Aorta (tissue), 5 donors: ENCODE measurements at regions of chr17 and their contacts with region 1.

Region 1: DNA sequence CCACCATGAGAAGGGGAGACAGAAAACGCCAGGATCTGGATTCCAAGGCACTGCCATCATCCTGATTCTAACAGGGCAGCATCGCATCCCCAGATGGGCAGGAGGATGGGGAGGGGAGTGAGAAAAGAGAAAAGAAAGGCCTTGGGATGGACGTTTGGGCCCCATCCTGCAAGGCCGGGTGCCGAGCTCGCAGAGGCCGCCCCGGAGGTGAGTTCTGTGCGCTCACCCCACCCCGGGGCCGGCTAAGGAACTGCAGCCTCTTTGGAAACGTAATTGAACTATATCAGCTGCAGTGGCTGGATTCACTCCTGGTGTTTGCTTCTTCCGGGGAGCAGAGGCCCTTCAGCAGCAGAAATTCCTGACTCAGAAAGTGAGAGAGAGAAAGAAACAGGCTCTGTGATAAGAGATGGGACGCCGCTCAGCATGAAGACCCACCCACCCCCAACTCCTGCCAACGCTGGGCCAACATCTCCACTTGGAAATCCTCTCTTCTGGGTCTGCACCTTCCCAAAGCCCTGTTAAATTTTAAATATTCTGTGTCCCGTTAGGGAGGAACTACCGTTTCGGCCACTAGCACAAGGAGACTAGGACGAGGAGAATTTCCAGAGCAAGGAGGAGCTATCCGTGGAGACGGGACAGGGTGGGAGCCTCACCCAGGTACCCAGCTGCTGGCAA is 8.5 kb upstream of the SSTR2 start:
- DNase-seq: peak; percentile 80 to 88
- ATAC-seq: peak; percentile 94
- H3K4me3 ChIP-seq: no peak overlapping the region
- H3K27ac ChIP-seq: no peak overlapping the region
- H3K4me1 ChIP-seq: no peaks in the 10 kb centered on the region
- H3K27me3 ChIP-seq: no peaks in the 10 kb centered on the region

Region 2: GRCh38 chr17:72556944-72557826 is 599.1 kb before region 1 on chr17:
- intact Hi-C with region 1: loop called (anchors 5 to 10 kb)
- DNase-seq: peak; percentile 66 to 82
- ATAC-seq: peak; percentile 63
- H3K4me3 ChIP-seq: no peak overlapping the region
- H3K27ac ChIP-seq: no peak overlapping the region
- H3K4me1 ChIP-seq: no peaks in the 10 kb centered on the region
- H3K27me3 ChIP-seq: no peaks in the 10 kb centered on the region

Region 3: DNA sequence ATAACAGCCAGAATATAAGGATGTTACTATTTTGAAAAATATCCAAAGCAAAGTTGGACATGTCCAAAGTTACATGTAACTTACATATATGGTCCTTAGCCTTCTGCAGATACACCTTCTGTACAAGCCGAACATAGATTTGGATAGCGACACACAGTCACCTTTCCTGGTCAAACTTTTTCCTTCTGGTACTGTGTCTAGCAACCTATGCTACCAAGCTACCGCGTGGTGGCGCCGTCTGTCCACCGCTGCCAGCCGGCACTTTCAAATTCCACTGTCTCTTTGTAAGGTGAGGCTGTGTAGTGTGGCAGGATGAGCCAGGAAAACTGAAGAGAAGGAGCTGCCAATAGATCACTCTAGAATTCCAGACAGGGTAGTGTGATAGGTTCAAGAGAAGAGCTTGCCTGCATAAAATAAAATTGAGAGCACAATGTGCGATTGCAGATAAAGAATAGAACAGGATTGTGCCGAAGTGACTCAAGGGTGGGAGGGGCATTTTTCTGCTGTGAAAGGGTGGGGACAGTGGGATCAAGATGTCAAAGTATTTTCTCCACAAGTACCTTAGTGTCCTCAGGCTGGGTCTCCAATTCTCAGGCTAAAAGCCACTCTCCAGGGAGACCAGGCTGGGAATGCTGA is 430.8 kb before region 1 on chr17:
- intact Hi-C with region 1: loop called (anchors 2 to 5 kb)
- DNase-seq: no peak
- ATAC-seq: no peak
- H3K4me3 ChIP-seq: no peak overlapping the region
- H3K27ac ChIP-seq: no peak overlapping the region
- H3K4me1 ChIP-seq: no peaks in the 10 kb centered on the region
- H3K27me3 ChIP-seq: no peaks in the 10 kb centered on the region

Region 4: GRCh38 chr17:73192894-73193701 is 36.8 kb after region 1 on chr17 and contains the start of gene COG1:
- intact Hi-C with region 1: no loop called
- DNase-seq: peak; percentile 92 to 94
- ATAC-seq: peak; percentile 90
- H3K4me3 ChIP-seq: peak within 1 kb of the TSS; percentile 83 to 91
- H3K27ac ChIP-seq: peak within 1 kb of the TSS in 1 of 2 donors; percentile 94
- H3K4me1 ChIP-seq: peaks cover 0 to 3% of the 10 kb centered on the region in 2 donors
- H3K27me3 ChIP-seq: no peaks in the 10 kb centered on the region
- total RNA-seq, gene COG1: 36.0 to 43.4 TPM